ENCODE measurements at regions of chr3 and their contacts with region 1.

Region 1: GRCh38 chr3:133040696-133041523 is 2.7 kb downstream of the TMEM108 start:
- DNase-seq: peak; percentile 49 to 59
- ATAC-seq: peak; percentile 66

Region 2: GRCh38 chr3:132730891-132731580 is 309.9 kb before region 1 on chr3:
- intact Hi-C with region 1: loop called in 1 of 2 experiments (anchors 10 kb)
- DNase-seq: no peak
- ATAC-seq: peak; percentile 77

Region 3: DNA sequence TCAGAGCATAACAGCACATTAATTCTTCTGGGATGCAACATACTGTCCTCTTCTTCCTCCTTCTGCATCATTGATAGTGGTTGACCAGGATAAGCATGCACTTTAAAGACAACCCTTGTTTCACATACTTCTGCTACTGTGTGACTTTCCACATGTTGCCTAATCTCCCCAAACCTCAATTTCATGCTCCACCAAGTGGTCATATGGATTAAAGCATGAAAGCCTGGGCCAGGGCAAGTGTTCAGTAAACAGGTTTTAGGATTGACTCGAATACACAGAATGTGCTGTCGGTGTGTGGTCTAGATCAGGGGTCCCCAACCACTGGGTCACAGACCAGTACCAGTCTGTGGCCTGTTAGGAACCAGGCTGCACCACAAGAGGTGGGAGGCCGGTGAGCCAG is 336.5 kb after region 1 on chr3:
- intact Hi-C with region 1: loop called in 1 of 2 experiments (anchors 10 kb)
- DNase-seq: no peak
- ATAC-seq: peak; percentile 25

Measured in left colon (tissue), 2 donors.